HepG2 (cell line): ENCODE measurements at regions of chr1 and their contacts with region 1.

Region 1: DNA sequence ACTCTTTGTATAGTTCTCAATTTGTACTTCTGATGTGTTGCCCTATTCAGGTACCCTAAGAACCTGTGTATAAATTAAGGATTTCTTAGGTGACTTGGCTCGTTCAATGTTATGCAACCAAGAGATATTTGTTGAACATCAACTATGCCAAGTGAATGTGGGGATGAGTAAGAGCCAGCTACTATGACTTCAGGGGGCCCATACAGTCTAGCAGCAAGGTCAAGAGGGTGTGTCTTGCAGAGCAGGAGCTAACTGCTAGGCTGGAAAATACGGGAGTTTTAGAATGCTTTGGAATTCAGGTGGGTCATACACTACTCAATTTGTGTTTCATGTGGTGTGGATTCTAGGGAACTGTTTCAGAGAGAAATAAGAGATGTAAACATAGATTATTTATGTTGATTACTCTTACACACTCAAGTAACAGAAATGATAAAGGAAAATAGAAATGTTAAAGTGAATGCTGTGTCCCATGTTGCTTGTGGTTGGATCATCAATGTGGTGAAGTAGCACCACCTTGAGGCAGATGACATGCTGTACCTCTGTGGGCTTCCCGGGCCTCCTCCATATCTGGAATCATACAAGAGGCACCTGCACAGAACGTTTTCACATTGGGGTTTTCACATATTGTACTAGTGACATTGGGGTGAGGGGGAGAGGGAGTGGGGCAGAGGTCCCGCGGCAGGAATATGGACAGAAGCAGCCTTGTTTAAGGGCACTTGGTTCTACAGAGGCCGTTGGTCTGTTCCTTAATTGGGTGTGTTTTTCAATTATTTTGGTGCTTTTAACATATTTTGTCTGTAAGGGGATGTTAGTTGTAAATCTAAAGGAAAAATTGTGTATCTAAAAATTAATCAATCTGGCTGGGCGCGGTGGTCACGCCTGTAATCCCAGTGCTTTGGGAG is 12.4 kb downstream of the ARPC5 start:
- DNase-seq: peak; percentile 61
- ATAC-seq: peak; percentile 99
- H3K4me3 ChIP-seq: no peak overlapping the region
- H3K27ac ChIP-seq: no peak overlapping the region
- H3K4me1 ChIP-seq: no peaks in the 10 kb centered on the region
- H3K27me3 ChIP-seq: no peaks in the 10 kb centered on the region
- CTCF ChIP-seq: peak; percentile 88
- EP300 ChIP-seq: no peak
- POLR2A ChIP-seq: no peak
- RAD21 ChIP-seq: peak; percentile 73

Region 2: GRCh38 chr1:183281553-183282091 is 341.5 kb before region 1 on chr1:
- CTCF ChIA-PET with region 1: interaction called, 13 read pairs
- POLR2A ChIA-PET with region 1: no interaction called
- in situ Hi-C with region 1: loop called (anchors 5 kb)
- intact Hi-C with region 1: loop called (anchors 1 kb)
- DNase-seq: peak; percentile 64
- ATAC-seq: peak; percentile 93
- H3K4me3 ChIP-seq: no peak overlapping the region
- H3K27ac ChIP-seq: no peak overlapping the region
- H3K4me1 ChIP-seq: no peaks in the 10 kb centered on the region
- H3K27me3 ChIP-seq: peaks cover 4 to 33% of the 10 kb centered on the region in 2 experiments; a peak in 3 of 5 replicates
- CTCF ChIP-seq: peak; percentile 87
- EP300 ChIP-seq: no peak
- POLR2A ChIP-seq: no peak
- RAD21 ChIP-seq: peak; percentile 63

Region 3: DNA sequence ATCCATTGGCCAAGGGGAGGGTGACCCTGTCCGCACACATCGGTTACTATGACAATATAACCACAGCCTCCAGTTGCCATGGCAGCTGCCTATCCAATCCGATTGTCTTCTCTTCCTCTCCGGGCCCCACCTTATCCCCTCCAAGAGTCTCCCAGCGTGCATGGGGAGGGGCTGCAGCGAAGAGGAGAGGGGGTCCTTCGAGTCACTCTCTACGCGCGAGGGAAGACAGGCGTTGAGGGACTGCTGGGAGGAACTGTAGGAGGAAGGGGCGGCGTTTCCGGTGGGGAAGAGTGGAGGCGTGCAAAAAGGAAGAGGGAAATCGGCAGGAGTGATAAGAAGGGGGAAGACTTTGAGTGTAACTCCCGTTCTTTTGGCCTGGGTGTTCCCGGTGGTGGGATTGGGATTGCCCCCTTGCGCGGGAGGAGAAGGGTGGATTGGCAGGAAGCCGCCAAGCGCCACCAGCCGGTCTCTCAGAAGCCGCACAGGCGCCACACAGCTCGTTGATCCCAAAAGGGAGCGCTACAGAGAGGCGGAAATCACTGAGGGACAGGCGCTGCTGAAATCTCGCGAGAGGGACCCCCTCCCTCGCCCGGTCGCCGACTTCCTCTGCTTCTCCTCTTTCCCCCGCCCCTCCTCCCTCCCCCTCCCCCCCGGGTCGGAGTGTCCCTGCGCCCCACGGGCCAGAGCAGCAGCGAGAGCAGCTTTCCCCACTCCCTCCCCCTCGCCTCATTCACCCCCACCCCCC is 151.2 kb before region 1 on chr1:
- CTCF ChIA-PET with region 1: interaction called, 3 read pairs
- POLR2A ChIA-PET with region 1: no interaction called
- in situ Hi-C with region 1: loop called (anchors 5 kb)
- intact Hi-C with region 1: loop called (anchors 1 kb)
- DNase-seq: peak; percentile 96
- ATAC-seq: peak; percentile 80
- H3K4me3 ChIP-seq: peak overlapping the region; percentile 80 to 99 (median 87)
- H3K27ac ChIP-seq: peak overlapping the region; percentile 100
- H3K4me1 ChIP-seq: peaks cover 53% of the 10 kb centered on the region
- H3K27me3 ChIP-seq: no peaks in the 10 kb centered on the region; a peak in 1 of 5 replicates
- CTCF ChIP-seq: peak; percentile 32; the same call in 1 of the 2 replicates
- EP300 ChIP-seq: no peak
- POLR2A ChIP-seq: peak; percentile 50 to 64; a peak in 3 of 4 replicates
- RAD21 ChIP-seq: peak; percentile 35

Region 4: DNA sequence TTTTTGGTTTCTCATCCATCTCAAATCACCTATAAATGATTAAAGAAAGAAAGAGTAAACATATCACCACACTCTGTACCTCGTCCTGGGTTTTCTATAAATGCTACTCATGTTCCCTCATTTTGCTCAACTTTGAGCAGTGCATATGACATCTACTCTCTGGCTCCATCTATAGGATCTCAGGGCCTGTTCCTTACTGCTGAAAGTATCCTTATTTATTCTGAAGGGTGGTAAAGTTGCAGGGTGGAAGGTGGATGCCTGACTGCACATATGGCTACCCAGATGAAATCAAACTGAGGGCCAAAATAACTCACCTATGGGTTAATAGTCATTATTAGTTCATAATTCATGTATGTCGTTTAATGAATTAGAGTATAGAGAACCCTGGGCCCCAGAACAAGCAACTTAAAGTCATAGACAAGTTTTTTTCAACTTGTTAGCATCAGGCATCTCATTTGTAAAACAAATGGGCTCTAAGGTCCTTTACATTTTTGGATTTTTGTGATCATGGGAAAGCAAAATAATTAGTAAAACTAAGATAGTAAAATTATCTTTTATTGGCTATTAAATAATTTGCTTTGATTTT is 79.4 kb before region 1 on chr1:
- CTCF ChIA-PET with region 1: no interaction called
- POLR2A ChIA-PET with region 1: no interaction called
- in situ Hi-C with region 1: no loop called
- intact Hi-C with region 1: loop called (anchors 10 kb)
- DNase-seq: peak; percentile 50
- ATAC-seq: peak; percentile 97
- H3K4me3 ChIP-seq: no peak overlapping the region
- H3K27ac ChIP-seq: no peak overlapping the region
- H3K4me1 ChIP-seq: no peaks in the 10 kb centered on the region
- H3K27me3 ChIP-seq: no peaks in the 10 kb centered on the region
- CTCF ChIP-seq: peak; percentile 62
- EP300 ChIP-seq: no peak
- POLR2A ChIP-seq: no peak
- RAD21 ChIP-seq: peak; percentile 47; the same call in 1 of the 2 replicates

Region 5: GRCh38 chr1:183685112-183685713 is 62.1 kb after region 1 on chr1:
- CTCF ChIA-PET with region 1: no interaction called
- POLR2A ChIA-PET with region 1: no interaction called
- in situ Hi-C with region 1: no loop called
- intact Hi-C with region 1: no loop called
- DNase-seq: peak; percentile 55
- ATAC-seq: peak; percentile 46; the same call in 2 of the 3 replicates
- H3K4me3 ChIP-seq: no peak overlapping the region
- H3K27ac ChIP-seq: no peak overlapping the region
- H3K4me1 ChIP-seq: no peaks in the 10 kb centered on the region
- H3K27me3 ChIP-seq: no peaks in the 10 kb centered on the region
- CTCF ChIP-seq: peak; percentile 73
- EP300 ChIP-seq: no peak
- POLR2A ChIP-seq: no peak
- RAD21 ChIP-seq: peak; percentile 63; the same call in 1 of the 2 replicates